Head of caudate nucleus (tissue), 42 donors: ENCODE measurements at regions of chr16 and their contacts with region 1.

Region 1: GRCh38 chr16:8567750-8568617 is 22.3 kb downstream of the TMEM114 start:
- DNase-seq: peak; percentile 49 to 91 (median 75)

Region 2: GRCh38 chr16:8878521-8878911 is 310.5 kb after region 1 on chr16:
- intact Hi-C with region 1: loop called (anchors 5 kb)
- DNase-seq: no peak